Activated T-helper 1 cell treated with anti-CD3 and anti-CD28 coated beads, Interleukin-12 subunit alpha, Interleukin-12 subunit beta, Interleukin-2, Interleukin-4 antibody, amounts not matched to agents 30 ng/mL and 10 ng/mL and 1 ng/mL, durations not matched to agents 14 hours and 24 hours and 36 hours (primary cell): ENCODE measurements at regions of chrX and their contacts with region 1.

Region 1: GRCh38 chrX:19544693-19545305 is 29.5 kb upstream of the MAP3K15 start:
- DNase-seq: no peak
- H3K4me3 Mint-ChIP-seq: no peak overlapping the region
- H3K27ac Mint-ChIP-seq: peak overlapping the region; percentile 61
- H3K4me1 Mint-ChIP-seq: peaks cover 35% of the 10 kb centered on the region
- H3K27me3 Mint-ChIP-seq: no peaks in the 10 kb centered on the region

Region 2: GRCh38 chrX:19593690-19594089 is 48.9 kb after region 1 on chrX:
- intact Hi-C with region 1: loop called (anchors 2 kb)
- DNase-seq: no peak
- H3K4me3 Mint-ChIP-seq: no peak overlapping the region
- H3K27ac Mint-ChIP-seq: no peak overlapping the region
- H3K4me1 Mint-ChIP-seq: peaks cover 5% of the 10 kb centered on the region
- H3K27me3 Mint-ChIP-seq: no peaks in the 10 kb centered on the region

Region 3: DNA sequence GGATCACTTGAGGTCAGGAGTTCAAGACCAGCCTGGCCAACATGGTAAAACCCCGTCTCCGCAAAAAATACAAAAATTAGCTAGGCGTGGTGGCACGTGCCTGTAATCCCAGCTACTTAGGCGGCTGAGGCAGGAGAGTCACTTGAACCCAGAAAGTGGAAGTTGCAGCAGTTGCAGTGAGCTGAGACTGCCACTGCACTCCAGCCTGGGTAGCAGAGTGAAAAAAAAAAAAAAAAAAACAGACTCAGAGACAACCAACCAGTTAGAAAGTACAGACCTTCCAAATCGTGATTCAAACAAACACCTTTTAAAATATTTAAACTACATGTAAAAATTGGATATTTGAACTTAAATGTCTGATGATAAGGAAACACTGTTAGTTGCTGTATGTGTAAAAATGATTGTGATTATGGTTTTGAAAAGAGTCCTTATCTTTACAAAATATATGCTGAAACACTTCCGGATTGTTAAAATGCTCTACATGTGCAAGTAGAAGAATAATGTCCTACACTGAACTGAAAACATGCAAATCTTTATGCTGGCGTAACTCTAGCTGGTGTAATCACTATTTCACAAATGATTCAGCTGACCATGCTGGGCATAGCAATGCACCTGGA is 304.8 kb after region 1 on chrX:
- intact Hi-C with region 1: no loop called
- DNase-seq: no peak
- H3K4me3 Mint-ChIP-seq: no peak overlapping the region
- H3K27ac Mint-ChIP-seq: no peak overlapping the region
- H3K4me1 Mint-ChIP-seq: peaks cover 27% of the 10 kb centered on the region
- H3K27me3 Mint-ChIP-seq: no peaks in the 10 kb centered on the region